ENCODE measurements at regions of chr10 and their contacts with region 1.

Region 1: GRCh38 chr10:115402690-115403089 is 309.5 kb downstream of the ATRNL1 start:
- DNase-seq: no peak
- H3K4me3 ChIP-seq: no peak overlapping the region
- H3K27ac ChIP-seq: no peak overlapping the region
- H3K4me1 ChIP-seq: no peaks in the 10 kb centered on the region
- H3K27me3 ChIP-seq: no peaks in the 10 kb centered on the region
- CTCF ChIP-seq: no peak

Region 2: GRCh38 chr10:115171392-115171960 is 231.2 kb before region 1 on chr10:
- CTCF ChIA-PET with region 1: no interaction called
- POLR2A ChIA-PET with region 1: no interaction called
- intact Hi-C with region 1: loop called (anchors 10 kb)
- DNase-seq: no peak
- H3K4me3 ChIP-seq: no peak overlapping the region
- H3K27ac ChIP-seq: no peak overlapping the region
- H3K4me1 ChIP-seq: no peaks in the 10 kb centered on the region
- H3K27me3 ChIP-seq: no peaks in the 10 kb centered on the region
- CTCF ChIP-seq: peak; percentile 62